ENCODE measurements at regions of chr6 and their contacts with region 1.

Region 1: DNA sequence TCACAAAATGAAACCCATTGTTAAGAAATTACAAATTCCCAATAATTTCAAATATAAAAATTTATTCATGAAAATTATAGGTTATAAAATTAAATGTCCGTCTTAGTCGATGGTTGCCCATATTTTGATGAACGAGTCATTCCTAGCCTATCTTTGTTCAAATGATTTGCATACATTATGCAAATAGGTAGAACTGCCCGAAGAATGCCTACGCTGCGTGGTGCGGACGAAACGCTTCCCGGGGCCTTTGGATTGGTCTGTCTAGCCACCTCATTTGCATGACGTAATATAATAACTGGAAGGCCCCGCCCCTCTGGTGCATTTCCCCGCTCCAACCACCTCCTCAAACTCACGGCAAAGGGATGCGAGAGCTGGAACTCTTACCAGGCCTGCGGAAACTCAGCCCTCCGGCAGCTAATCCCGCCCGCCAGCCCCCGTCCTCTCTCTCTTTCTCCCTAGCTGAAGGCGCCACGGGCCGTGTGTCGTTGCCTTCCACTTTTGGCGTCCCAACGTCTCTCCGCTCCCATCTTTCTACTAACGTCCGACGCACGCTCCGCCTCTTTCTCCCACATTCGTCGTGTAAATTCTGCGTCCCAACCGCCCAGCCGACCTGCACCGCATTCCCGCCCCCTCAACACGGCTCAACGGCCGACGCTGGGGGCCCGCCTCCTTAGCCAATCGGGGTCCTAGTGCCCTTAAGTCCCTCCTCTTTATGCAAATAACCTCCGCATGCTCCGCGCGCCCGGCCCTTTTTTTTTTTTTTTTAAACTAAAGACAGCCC is 520 bp upstream of the PRRC2A start:
- DNase-seq: peak; percentile 95
- ATAC-seq: peak; percentile 93
- H3K4me3 ChIP-seq: peak overlapping the region; percentile 58 to 76
- H3K27ac ChIP-seq: peak overlapping the region; percentile 92
- H3K4me1 ChIP-seq: peaks cover 12% of the 10 kb centered on the region
- H3K27me3 ChIP-seq: no peaks in the 10 kb centered on the region
- CTCF ChIP-seq: no peak

Region 2: GRCh38 chr6:31546962-31547726 is 72.9 kb before region 1 on chr6 and contains the start of gene NFKBIL1:
- CTCF ChIA-PET with region 1: interaction called, 10 read pairs
- POLR2A ChIA-PET with region 1: no interaction called
- in situ Hi-C with region 1: no loop called
- intact Hi-C with region 1: no loop called
- DNase-seq: peak; percentile 78
- ATAC-seq: peak; percentile 94
- H3K4me3 ChIP-seq: peak within 1 kb of the TSS; percentile 60 to 80
- H3K27ac ChIP-seq: peak within 1 kb of the TSS; percentile 96
- H3K4me1 ChIP-seq: peaks cover 12% of the 10 kb centered on the region
- H3K27me3 ChIP-seq: no peaks in the 10 kb centered on the region
- CTCF ChIP-seq: no peak; the same call in none of the 2 replicates
- total RNA-seq, gene NFKBIL1: 27.9 TPM

Region 3: GRCh38 chr6:31630177-31630934 is 10.4 kb after region 1 on chr6:
- CTCF ChIA-PET with region 1: no interaction called
- POLR2A ChIA-PET with region 1: no interaction called
- in situ Hi-C with region 1: no loop called
- intact Hi-C with region 1: loop called (anchors 1 kb)
- DNase-seq: no peak
- ATAC-seq: no peak
- H3K4me3 ChIP-seq: no peak overlapping the region
- H3K27ac ChIP-seq: no peak overlapping the region
- H3K4me1 ChIP-seq: peaks cover 5% of the 10 kb centered on the region; the same call in 1 of the 2 replicates
- H3K27me3 ChIP-seq: no peaks in the 10 kb centered on the region
- CTCF ChIP-seq: no peak

Region 4: GRCh38 chr6:31643818-31644454 is 23.9 kb after region 1 on chr6:
- CTCF ChIA-PET with region 1: no interaction called
- POLR2A ChIA-PET with region 1: interaction called, 10 read pairs
- in situ Hi-C with region 1: no loop called
- intact Hi-C with region 1: no loop called
- DNase-seq: no peak
- ATAC-seq: 0 out of 2 replicates have a peak, but pooled peaks have one; percentile 38
- H3K4me3 ChIP-seq: no peak overlapping the region
- H3K27ac ChIP-seq: no peak overlapping the region
- H3K4me1 ChIP-seq: no peaks in the 10 kb centered on the region
- H3K27me3 ChIP-seq: no peaks in the 10 kb centered on the region
- CTCF ChIP-seq: no peak

Measured in Panc1 (cell line).